HepG2 (cell line): ENCODE measurements at regions of chr16 and their contacts with region 1.

Region 1: GRCh38 chr16:78503602-78504001 is 404.1 kb downstream of the WWOX start:
- DNase-seq: peak; percentile 61
- ATAC-seq: no peak
- H3K4me3 ChIP-seq: no peak overlapping the region
- H3K27ac ChIP-seq: no peak overlapping the region
- H3K4me1 ChIP-seq: peaks cover 67% of the 10 kb centered on the region
- H3K27me3 ChIP-seq: no peaks in the 10 kb centered on the region
- CTCF ChIP-seq: peak; percentile 71
- EP300 ChIP-seq: no peak
- POLR2A ChIP-seq: no peak
- RAD21 ChIP-seq: peak; percentile 70

Region 2: DNA sequence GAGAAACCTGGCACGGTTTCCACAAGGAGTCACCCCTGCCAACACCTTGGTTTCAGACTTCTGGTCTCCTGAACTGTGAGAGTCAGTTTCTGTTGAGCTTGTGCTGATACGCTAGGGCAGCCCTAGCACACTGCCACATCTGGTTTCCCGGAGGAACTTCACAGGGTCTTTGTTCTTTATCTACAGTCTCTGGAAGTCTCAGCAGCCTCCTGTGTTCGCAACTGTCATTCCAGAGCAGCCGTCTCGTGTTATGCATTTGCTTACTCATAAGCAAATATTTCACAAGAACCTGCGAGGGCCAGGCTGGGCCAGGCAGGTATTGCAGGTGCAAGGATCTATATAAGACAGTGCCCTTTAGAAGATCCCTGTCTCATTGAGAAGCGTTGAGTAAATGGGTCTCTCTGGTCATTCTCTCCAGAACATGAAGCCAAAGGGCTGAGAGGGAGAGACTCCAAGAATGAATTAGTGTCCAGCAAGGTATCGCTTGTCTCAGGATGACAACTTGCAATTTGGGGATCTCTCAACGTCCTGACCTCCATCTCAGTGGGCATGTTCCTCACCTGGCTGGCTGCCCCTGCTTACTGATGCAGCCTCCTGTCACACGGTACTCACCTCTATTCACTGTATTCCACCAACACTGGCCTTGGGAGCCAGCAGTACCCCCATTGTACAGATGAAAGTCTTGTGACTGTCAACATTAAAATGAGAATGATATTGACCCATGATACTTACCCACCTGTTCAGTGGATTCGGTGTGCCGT is 263.0 kb before region 1 on chr16:
- CTCF ChIA-PET with region 1: no interaction called
- POLR2A ChIA-PET with region 1: interaction called, 4 read pairs
- in situ Hi-C with region 1: no loop called
- intact Hi-C with region 1: loop called (anchors 5 kb)
- DNase-seq: peak; percentile 93
- ATAC-seq: peak; percentile 98
- H3K4me3 ChIP-seq: 0 out of 6 replicates have a peak overlapping the region, but pooled peaks of 1 of the 3 experiments have one; percentile 8
- H3K27ac ChIP-seq: peak overlapping the region; percentile 11
- H3K4me1 ChIP-seq: peaks cover 55% of the 10 kb centered on the region
- H3K27me3 ChIP-seq: no peaks in the 10 kb centered on the region
- CTCF ChIP-seq: peak; percentile 67
- EP300 ChIP-seq: peak; percentile 75 to 76
- POLR2A ChIP-seq: no peak
- RAD21 ChIP-seq: no peak

Region 3: DNA sequence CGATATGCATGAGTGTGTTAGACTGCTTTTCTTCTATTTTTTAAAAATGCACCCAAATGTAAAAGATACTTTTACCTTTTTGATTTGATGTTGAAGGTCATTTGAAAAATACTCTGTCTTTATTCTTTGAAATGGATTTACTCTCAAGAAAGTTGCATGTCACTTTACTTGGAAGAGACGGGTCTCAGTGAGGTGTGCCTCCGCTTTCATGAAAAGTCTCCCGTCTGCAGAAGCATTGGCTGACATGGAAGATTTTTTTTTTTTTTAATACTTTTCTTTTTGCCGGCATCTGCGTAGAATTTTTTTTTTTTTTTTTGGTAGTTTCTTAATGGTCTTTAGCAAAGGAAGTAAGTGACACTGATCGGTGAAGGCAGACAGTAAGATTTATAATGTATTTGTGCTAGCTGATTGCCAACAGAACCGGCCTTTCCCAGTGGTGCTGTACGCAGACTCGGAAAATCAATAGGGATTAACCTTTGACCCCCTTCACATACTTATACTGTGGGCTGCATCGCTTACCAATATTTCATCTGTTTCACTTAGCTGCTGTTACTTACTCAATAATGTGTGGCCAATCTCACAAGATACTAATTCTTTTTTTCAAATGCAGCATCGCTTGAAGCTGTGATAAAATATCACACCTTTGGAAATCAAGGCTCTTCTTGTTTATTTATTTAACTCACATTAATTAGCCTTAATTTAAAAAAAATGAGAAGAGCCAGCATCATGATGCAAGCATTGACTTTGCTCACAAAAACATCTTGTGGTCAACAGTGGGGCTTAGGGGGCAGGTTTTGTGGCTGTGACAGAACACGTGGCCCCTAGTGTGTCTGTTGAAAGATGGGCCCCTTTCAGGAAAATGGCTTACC is 20.2 kb before region 1 on chr16:
- CTCF ChIA-PET with region 1: no interaction called
- POLR2A ChIA-PET with region 1: interaction called, 88 read pairs
- in situ Hi-C with region 1: no loop called
- intact Hi-C with region 1: loop called (anchors 1 kb)
- DNase-seq: peak; percentile 93
- ATAC-seq: peak; percentile 72
- H3K4me3 ChIP-seq: no peak overlapping the region
- H3K27ac ChIP-seq: peak overlapping the region; percentile 90
- H3K4me1 ChIP-seq: peaks cover 89% of the 10 kb centered on the region
- H3K27me3 ChIP-seq: no peaks in the 10 kb centered on the region
- CTCF ChIP-seq: no peak
- EP300 ChIP-seq: peak; percentile 37 to 92; a peak in 3 of 4 replicates
- POLR2A ChIP-seq: no peak
- RAD21 ChIP-seq: no peak

Region 4: DNA sequence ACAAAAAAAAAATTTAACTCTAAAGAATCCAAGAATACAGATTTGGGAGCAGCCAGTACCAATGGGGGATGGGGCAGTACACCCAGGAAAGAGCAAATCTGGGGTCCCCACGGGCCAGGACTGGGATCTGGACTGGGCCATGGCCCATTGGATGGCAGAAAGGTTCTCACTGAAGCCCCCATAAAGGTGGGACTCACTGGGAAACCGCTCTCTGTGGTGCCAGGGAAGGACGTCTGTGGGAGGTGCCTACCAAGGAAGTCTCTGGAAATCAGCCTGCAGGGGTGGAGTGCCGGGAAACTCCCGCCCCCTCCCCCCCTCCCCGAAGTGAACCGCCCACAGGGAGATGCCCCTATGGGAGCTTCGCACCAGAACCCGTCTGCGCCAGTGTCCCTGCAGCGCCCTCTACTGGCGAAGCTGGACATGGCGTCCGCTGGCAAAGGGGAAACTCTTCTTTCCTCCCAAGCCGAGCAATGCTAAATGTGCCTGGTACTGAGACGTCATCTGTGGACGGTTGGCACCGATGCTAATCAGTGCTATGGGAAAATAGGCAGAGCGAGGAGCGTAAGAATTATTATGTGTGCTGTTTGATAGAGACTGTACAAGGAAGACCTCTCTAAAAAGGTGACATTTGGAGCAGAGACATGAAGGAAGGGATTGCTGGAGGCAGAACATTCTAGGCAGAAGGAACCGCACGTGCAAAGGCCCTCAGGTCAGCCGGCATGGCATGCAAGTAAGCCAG is 266.9 kb after region 1 on chr16:
- CTCF ChIA-PET with region 1: no interaction called
- POLR2A ChIA-PET with region 1: interaction called, 5 read pairs
- in situ Hi-C with region 1: loop called (anchors 5 kb)
- intact Hi-C with region 1: loop called (anchors 2 kb)
- DNase-seq: peak; percentile 67
- ATAC-seq: peak; percentile 94
- H3K4me3 ChIP-seq: peak overlapping the region in 1 of 3 experiments; percentile 40; a peak in 1 of 6 replicates
- H3K27ac ChIP-seq: no peak overlapping the region
- H3K4me1 ChIP-seq: peaks cover 30% of the 10 kb centered on the region
- H3K27me3 ChIP-seq: no peaks in the 10 kb centered on the region
- CTCF ChIP-seq: peak; percentile 96
- EP300 ChIP-seq: no peak
- POLR2A ChIP-seq: no peak
- RAD21 ChIP-seq: peak; percentile 89

Region 5: GRCh38 chr16:79601931-79602627 is 1098.5 kb after region 1 on chr16:
- CTCF ChIA-PET with region 1: no interaction called
- POLR2A ChIA-PET with region 1: no interaction called
- in situ Hi-C with region 1: loop called (anchors 25 kb)
- intact Hi-C with region 1: loop called (anchors 10 kb)
- DNase-seq: peak; percentile 76
- ATAC-seq: peak; percentile 46
- H3K4me3 ChIP-seq: peak overlapping the region; percentile 44 to 67 (median 50); a peak in 5 of 6 replicates
- H3K27ac ChIP-seq: no peak overlapping the region
- H3K4me1 ChIP-seq: peaks cover 28% of the 10 kb centered on the region
- H3K27me3 ChIP-seq: peaks cover 9 to 29% of the 10 kb centered on the region in 2 experiments
- CTCF ChIP-seq: peak; percentile 82
- EP300 ChIP-seq: no peak
- POLR2A ChIP-seq: no peak
- RAD21 ChIP-seq: peak; percentile 53; the same call in 1 of the 2 replicates

Region 6: GRCh38 chr16:80045861-80046260 is 1542.3 kb after region 1 on chr16:
- CTCF ChIA-PET with region 1: no interaction called
- POLR2A ChIA-PET with region 1: no interaction called
- in situ Hi-C with region 1: no loop called
- intact Hi-C with region 1: no loop called
- DNase-seq: no peak
- ATAC-seq: no peak
- H3K4me3 ChIP-seq: no peak overlapping the region
- H3K27ac ChIP-seq: no peak overlapping the region
- H3K4me1 ChIP-seq: no peaks in the 10 kb centered on the region
- H3K27me3 ChIP-seq: no peaks in the 10 kb centered on the region
- CTCF ChIP-seq: no peak
- EP300 ChIP-seq: no peak
- POLR2A ChIP-seq: no peak
- RAD21 ChIP-seq: no peak